Aorta (tissue), 5 donors: ENCODE measurements at regions of chr12 and their contacts with region 1.

Region 1: DNA sequence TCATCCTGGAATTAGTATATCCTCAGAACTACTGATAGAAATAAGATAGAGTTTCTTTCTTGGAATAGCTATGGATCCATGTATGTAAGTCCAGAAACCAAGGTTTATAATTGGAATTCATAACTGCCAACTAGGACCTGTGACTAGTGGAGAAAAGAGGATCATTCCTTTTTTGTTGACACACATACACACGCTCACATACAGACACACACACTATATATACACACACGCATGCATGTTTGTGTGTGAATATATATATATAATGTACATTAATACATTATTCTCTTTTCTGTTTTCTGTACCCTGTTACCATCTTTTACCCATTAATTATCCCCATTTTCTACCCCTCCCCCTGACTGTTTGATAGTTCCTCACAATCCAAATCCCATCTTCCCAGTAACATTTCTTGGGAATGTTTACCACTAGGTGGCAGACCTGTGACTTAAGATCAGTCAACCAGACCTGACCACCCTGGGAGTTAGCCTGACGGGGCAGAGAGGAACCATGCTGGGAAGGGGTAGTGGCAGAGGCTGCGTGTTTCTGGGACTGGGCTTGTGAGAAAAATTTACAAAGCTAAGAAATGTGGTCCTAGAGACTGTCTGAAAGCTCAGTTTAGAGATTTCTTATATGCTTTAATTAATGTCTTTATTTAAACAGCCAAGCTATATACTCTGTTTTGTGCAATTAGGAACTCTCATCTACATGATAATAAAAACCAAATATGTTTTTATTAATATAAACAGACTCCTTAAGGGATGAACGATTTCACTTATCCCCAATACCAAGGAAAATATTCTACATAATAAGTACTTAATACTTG is 308.0 kb downstream of the PPFIA2 start:
- DNase-seq: no peak
- ATAC-seq: peak; percentile 60
- H3K4me3 ChIP-seq: no peak overlapping the region
- H3K27ac ChIP-seq: no peak overlapping the region
- H3K4me1 ChIP-seq: no peaks in the 10 kb centered on the region
- H3K27me3 ChIP-seq: no peaks in the 10 kb centered on the region

Region 2: GRCh38 chr12:81468206-81468605 is 17.1 kb after region 1 on chr12:
- intact Hi-C with region 1: no loop called
- DNase-seq: no peak
- ATAC-seq: no peak
- H3K4me3 ChIP-seq: no peak overlapping the region
- H3K27ac ChIP-seq: no peak overlapping the region
- H3K4me1 ChIP-seq: no peaks in the 10 kb centered on the region
- H3K27me3 ChIP-seq: no peaks in the 10 kb centered on the region

Region 3: DNA sequence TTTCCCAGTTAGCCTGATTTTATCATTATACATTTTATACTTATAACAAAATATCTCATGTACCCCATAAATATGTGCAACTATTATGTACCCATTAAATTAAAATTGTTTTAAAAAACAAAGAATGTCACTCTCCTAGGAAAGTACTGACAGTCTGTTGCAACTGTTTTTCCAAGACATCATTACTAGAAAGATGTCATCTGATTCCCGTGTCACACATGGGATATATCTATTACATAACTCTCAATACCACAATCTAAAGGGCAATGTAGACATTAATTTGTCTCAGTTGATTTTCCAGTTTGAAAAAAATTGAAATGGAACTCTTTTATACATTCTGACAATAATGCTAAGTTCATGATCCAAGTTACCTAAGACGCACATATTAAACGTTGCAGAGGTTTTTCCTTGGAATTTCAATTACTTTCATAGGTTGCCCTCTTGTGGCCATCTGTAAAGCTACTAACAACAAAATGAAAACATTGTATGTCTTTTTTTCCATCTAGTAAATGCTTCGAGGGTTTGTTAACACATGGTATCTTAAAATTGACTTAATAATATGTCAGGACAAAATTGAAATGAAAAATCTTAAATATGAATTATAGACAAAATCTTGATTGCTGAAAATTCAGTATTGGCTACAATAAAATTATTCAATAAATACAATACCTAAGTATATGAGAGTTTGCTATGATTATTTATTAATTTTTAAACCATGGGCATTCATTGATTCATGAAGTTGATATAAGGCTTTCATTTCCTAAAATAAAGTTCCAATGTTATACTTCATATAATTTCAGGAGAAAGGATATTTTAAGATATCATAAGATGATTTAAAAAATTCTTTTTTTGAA is 176.4 kb after region 1 on chr12:
- intact Hi-C with region 1: loop called (anchors 2 to 5 kb)
- DNase-seq: no peak
- ATAC-seq: no peak
- H3K4me3 ChIP-seq: no peak overlapping the region
- H3K27ac ChIP-seq: no peak overlapping the region
- H3K4me1 ChIP-seq: no peaks in the 10 kb centered on the region
- H3K27me3 ChIP-seq: no peaks in the 10 kb centered on the region

Region 4: GRCh38 chr12:81963651-81964050 is 512.5 kb after region 1 on chr12:
- intact Hi-C with region 1: no loop called
- DNase-seq: no peak
- ATAC-seq: no peak
- H3K4me3 ChIP-seq: no peak overlapping the region
- H3K27ac ChIP-seq: no peak overlapping the region
- H3K4me1 ChIP-seq: no peaks in the 10 kb centered on the region
- H3K27me3 ChIP-seq: no peaks in the 10 kb centered on the region